Vagina (tissue), 2 donors: ENCODE measurements at regions of chr4 and their contacts with region 1.

Region 1: DNA sequence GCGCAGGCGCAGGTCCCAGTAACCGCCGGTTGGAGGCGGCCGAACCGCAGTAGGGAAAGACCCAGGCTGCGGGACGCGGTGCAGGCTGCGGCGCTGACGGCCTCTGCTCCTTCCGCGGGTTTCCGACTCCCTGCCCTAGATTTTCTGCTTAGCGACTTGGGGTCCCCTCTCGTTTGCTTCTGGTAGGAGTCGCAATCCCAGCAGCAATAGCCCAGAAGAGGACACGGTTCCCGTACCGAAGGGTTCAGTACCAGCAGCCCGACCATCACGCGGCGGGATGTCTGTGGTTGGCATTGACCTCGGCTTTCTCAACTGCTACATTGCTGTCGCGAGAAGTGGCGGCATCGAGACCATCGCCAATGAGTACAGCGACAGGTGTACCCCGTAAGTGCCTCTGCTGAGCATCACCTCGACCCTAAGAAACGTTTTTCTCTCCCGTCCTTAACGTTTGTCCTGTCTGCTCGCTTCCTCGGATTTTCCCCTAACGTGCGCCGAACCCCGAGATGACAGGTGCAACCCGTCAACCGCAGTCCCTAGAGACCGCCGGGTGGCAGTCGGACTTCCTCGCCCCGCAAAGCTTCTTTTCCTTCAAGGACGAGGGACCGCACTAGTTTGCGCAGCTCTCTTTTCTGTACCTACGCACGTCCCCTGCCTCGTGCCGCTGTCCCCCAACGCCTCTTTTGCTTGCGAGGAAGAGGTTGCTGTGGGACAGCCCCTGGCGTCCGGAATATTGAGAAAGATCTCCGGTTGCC is at the start of gene HSPA4L:
- DNase-seq: no peak
- H3K4me3 ChIP-seq: peak within 1 kb of the TSS; percentile 67 to 68
- H3K27ac ChIP-seq: peak within 1 kb of the TSS; percentile 80
- H3K4me1 ChIP-seq: no peaks in the 10 kb centered on the region
- H3K27me3 ChIP-seq: no peaks in the 10 kb centered on the region
- CTCF ChIP-seq: peak in 1 of 3 experiments; percentile 26
- POLR2A ChIP-seq: peak in 1 of 2 donors; percentile 63
- total RNA-seq, gene HSPA4L: 14.2 TPM

Region 2: DNA sequence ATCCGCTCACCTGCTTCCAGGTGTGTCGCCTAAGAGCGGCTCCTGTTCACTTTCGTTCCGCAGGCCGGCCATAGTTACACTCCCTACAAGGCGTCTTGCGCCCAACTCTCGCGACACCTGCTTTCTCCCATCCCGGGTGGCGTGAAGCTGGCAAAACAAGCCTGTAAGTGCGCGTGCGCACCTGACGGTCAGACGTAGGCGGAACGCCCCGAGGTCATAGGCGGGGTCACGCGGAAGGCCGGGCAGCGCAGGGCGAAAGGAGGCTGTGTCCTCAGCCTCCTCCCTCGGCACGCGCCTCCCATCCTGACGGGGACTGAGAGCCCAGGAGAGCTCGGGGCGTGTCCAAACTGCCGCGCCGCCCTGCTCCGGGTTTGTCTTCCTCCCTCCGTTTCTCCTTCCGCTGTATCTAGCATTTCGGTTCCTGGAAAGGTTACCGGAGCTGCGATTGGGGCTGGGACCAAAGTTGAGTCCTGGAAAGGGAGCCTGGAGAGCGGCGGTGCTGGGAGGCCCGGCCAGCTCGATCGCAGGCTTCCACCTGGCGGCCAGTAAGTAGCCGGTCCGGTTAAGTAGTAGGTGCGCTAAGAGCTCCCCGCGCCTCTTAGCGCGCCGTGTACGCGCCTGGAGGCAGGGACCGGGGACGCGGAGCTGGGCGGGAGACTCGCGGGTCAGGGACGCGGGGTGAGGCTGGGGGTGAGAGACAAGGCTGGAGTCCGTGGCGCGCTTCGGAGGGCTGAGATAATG is 182.8 kb after region 1 on chr4 and contains the starts of genes ABHD18 and MFSD8:
- intact Hi-C with region 1: loop called (anchors 5 kb)
- DNase-seq: peak; percentile 99
- H3K4me3 ChIP-seq: peak within 1 kb of the TSS; percentile 68 to 77
- H3K27ac ChIP-seq: peak within 1 kb of the TSS; percentile 92
- H3K4me1 ChIP-seq: peaks cover 16% of the 10 kb centered on the region
- H3K27me3 ChIP-seq: no peaks in the 10 kb centered on the region
- CTCF ChIP-seq: peak in 2 of 3 experiments; percentile 27 to 46
- POLR2A ChIP-seq: peak in 1 of 2 donors; percentile 17
- total RNA-seq, gene ABHD18: 8.6 TPM
- total RNA-seq, gene MFSD8: 38.8 TPM